Caco-2 (cell line): ENCODE measurements at regions of chr3 and their contacts with region 1.

Region 1: GRCh38 chr3:140972833-140973232 is 31.2 kb downstream of the SLC25A36 start:
- DNase-seq: no peak
- H3K4me3 ChIP-seq: no peak overlapping the region
- H3K4me3 Mint-ChIP-seq: no peak overlapping the region
- H3K27ac Mint-ChIP-seq: no peak overlapping the region
- H3K4me1 ChIP-seq: no peaks in the 10 kb centered on the region
- H3K4me1 Mint-ChIP-seq: no peaks in the 10 kb centered on the region
- H3K27me3 ChIP-seq: no peaks in the 10 kb centered on the region
- H3K27me3 Mint-ChIP-seq: no peaks in the 10 kb centered on the region
- CTCF ChIP-seq: peak; percentile 27 to 36

Region 2: GRCh38 chr3:140898340-140899180 is 74.3 kb before region 1 on chr3:
- CTCF ChIA-PET with region 1: no interaction called
- POLR2A ChIA-PET with region 1: no interaction called
- intact Hi-C with region 1: loop called (anchors 1 kb)
- DNase-seq: peak in 1 of 2 experiments; percentile 70
- H3K4me3 ChIP-seq: no peak overlapping the region
- H3K4me3 Mint-ChIP-seq: no peak overlapping the region
- H3K27ac Mint-ChIP-seq: no peak overlapping the region
- H3K4me1 ChIP-seq: no peaks in the 10 kb centered on the region
- H3K4me1 Mint-ChIP-seq: no peaks in the 10 kb centered on the region
- H3K27me3 ChIP-seq: no peaks in the 10 kb centered on the region
- H3K27me3 Mint-ChIP-seq: peaks cover 13% of the 10 kb centered on the region
- CTCF ChIP-seq: peak; percentile 49 to 62

Region 3: DNA sequence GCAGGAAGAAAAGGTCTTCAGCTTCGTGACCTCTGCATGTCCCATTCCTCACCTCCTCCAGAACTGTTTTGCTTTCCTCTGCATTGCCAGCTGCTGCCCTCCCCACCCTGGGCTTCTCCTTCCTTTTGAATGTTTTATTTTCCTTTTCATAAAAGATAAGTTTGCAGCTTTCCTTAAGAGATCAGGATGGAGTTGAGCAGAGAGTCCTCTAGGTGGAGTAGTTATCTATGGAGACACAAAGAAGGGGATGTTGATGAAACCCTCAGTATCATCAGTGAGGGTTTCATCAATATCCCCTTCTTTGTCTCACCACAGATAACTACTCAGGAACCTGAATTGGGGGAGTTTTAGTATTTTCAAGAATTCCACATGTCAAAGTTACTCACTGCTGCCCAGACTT is 50.2 kb before region 1 on chr3:
- CTCF ChIA-PET with region 1: interaction called, 3 read pairs
- POLR2A ChIA-PET with region 1: no interaction called
- intact Hi-C with region 1: loop called (anchors 1 kb)
- DNase-seq: peak in 1 of 2 experiments; percentile 41
- H3K4me3 ChIP-seq: no peak overlapping the region
- H3K4me3 Mint-ChIP-seq: no peak overlapping the region
- H3K27ac Mint-ChIP-seq: no peak overlapping the region
- H3K4me1 ChIP-seq: peaks cover 8% of the 10 kb centered on the region
- H3K4me1 Mint-ChIP-seq: peaks cover 29% of the 10 kb centered on the region
- H3K27me3 ChIP-seq: no peaks in the 10 kb centered on the region
- H3K27me3 Mint-ChIP-seq: no peaks in the 10 kb centered on the region
- CTCF ChIP-seq: peak; percentile 27 to 54

Region 4: DNA sequence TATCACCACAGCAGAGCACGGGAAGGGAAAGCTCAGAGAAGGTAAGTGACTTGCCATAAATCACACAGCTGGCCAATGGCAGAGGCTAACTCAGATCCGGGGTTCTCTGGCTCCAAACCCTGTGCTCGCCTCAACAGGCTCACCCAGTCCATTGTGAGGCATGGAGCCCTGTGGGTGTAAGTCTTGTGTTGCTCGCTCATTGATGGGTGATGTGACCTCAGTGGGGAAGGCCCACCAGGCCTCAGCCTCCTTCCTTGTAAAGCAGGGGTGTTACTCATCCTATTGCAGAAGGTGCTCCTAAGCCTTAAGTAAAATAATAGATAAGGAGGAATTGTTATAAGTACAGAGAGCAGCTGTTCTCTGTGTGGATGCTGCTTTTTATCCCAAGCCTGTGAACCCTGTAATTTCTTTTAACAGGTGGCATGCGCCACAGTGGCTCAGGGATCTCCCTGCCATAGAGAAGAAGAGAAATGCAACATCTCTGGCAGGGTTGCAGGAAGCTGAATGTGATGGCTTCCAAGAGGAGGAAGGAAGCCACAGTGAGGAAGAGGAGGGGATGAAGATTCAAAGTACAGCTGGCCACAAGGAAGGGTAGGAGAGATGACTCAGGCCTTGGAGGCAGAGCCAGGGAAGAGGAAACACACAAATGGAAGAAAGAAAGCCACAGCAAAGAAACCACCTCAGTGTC is 47.5 kb after region 1 on chr3:
- CTCF ChIA-PET with region 1: no interaction called
- POLR2A ChIA-PET with region 1: no interaction called
- intact Hi-C with region 1: no loop called
- DNase-seq: no peak
- H3K4me3 ChIP-seq: no peak overlapping the region
- H3K4me3 Mint-ChIP-seq: no peak overlapping the region
- H3K27ac Mint-ChIP-seq: no peak overlapping the region
- H3K4me1 ChIP-seq: no peaks in the 10 kb centered on the region
- H3K4me1 Mint-ChIP-seq: no peaks in the 10 kb centered on the region
- H3K27me3 ChIP-seq: no peaks in the 10 kb centered on the region
- H3K27me3 Mint-ChIP-seq: peaks cover under 1% of the 10 kb centered on the region
- CTCF ChIP-seq: no peak